ENCODE measurements at regions of chr13 and their contacts with region 1.

Region 1: DNA sequence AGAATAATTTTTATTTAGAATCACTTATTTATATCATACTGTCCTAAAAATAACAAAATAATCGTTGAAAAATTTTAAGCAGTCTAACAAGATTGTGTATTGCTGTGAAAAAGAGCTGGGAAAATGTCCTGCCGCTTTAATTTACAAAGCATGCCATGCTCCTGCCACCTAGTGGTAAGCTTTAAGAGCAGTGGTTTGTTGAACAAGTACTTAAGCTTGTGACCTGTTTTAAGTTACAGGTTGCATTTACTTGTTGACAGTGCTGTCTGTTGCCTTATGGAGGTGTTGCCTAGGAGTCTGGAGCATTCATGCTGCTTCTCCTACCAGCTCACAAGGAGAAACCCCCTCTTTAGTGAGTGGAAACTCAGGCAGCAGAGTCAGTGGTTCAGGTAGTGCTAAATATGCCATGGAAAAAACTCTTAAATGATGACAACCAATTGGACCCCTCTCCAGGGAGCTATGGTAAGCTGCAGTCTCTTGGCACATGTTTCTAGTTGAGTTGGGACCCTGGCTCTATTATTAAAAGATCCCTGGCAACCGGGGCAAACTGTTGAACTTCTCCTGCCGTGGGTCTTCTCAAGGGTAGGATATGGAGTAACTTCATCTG is 68.4 kb downstream of the SPATA13 start:
- DNase-seq: peak; percentile 65
- ATAC-seq: peak; percentile 69
- H3K4me3 ChIP-seq: no peak overlapping the region
- H3K27ac ChIP-seq: no peak overlapping the region
- H3K4me1 ChIP-seq: peaks cover 11% of the 10 kb centered on the region
- H3K27me3 ChIP-seq: no peaks in the 10 kb centered on the region
- CTCF ChIP-seq: peak; percentile 80
- EP300 ChIP-seq: no peak
- POLR2A ChIP-seq: no peak
- RAD21 ChIP-seq: peak; percentile 62

Region 2: GRCh38 chr13:24020375-24020830 is 208.6 kb before region 1 on chr13:
- CTCF ChIA-PET with region 1: interaction called, 25 read pairs
- POLR2A ChIA-PET with region 1: no interaction called
- in situ Hi-C with region 1: loop called (anchors 5 kb)
- intact Hi-C with region 1: loop called (anchors 1 kb)
- DNase-seq: peak; percentile 51
- ATAC-seq: peak; percentile 67
- H3K4me3 ChIP-seq: no peak overlapping the region
- H3K27ac ChIP-seq: no peak overlapping the region
- H3K4me1 ChIP-seq: no peaks in the 10 kb centered on the region
- H3K27me3 ChIP-seq: peaks cover 0 to 6% of the 10 kb centered on the region in 2 experiments; a peak in 2 of 5 replicates
- CTCF ChIP-seq: peak; percentile 68
- EP300 ChIP-seq: no peak
- POLR2A ChIP-seq: no peak
- RAD21 ChIP-seq: peak; percentile 69

Region 3: GRCh38 chr13:24053519-24054251 is 175.3 kb before region 1 on chr13:
- CTCF ChIA-PET with region 1: interaction called, 6 read pairs
- POLR2A ChIA-PET with region 1: no interaction called
- in situ Hi-C with region 1: loop called (anchors 10 kb)
- intact Hi-C with region 1: loop called (anchors 2 kb)
- DNase-seq: peak; percentile 67
- ATAC-seq: peak; percentile 96
- H3K4me3 ChIP-seq: no peak overlapping the region
- H3K27ac ChIP-seq: no peak overlapping the region
- H3K4me1 ChIP-seq: peaks cover 17% of the 10 kb centered on the region
- H3K27me3 ChIP-seq: peaks cover 0 to 7% of the 10 kb centered on the region in 2 experiments; a peak in 1 of 5 replicates
- CTCF ChIP-seq: peak; percentile 89
- EP300 ChIP-seq: no peak
- POLR2A ChIP-seq: no peak
- RAD21 ChIP-seq: peak; percentile 86

Measured in HepG2 (cell line).